ENCODE measurements at regions of chr1 and their contacts with region 1.

Region 1: GRCh38 chr1:91165033-91165654 is 143.3 kb upstream of the ZNF644 start:
- DNase-seq: peak; percentile 66 to 80
- ATAC-seq: peak; percentile 88 to 96 (median 93)
- H3K4me3 ChIP-seq: no peak overlapping the region
- H3K27ac ChIP-seq: no peak overlapping the region
- H3K4me1 ChIP-seq: no peaks in the 10 kb centered on the region
- H3K27me3 ChIP-seq: peaks cover 0 to 6% (median 0%) of the 10 kb centered on the region in 7 donors
- CTCF ChIP-seq: peak; percentile 71 to 96 (median 89)

Region 2: DNA sequence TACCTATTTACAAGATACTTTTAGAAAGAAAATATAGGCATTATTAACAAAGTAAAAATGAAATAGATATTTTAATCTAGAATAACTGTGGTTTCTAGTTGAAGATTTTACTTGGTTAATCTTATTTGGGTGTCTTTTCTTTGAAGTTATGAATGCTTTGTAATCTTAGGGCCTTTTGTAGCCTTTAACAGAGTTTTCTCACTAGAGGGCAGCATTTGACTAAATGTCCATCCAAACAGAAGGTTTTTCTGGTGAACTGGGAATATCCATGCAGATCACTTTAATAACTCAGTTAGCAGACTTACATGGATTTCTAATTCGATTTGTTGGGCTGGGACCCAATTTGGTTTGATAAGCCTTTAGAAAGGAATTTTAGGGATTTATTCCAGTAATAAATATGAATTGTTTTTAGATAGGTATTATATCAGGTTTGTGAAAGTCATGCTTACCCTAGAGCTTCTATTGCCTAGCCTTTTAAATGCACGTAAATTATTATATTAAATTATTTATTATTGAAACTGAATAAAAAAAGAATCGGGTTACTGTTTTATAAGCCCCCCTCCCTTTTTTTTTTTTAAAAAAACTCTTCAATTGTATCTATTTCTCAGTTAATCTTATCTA is 1050.5 kb before region 1 on chr1:
- intact Hi-C with region 1: loop called in 4 of 10 experiments (anchors 10 kb)
- DNase-seq: no peak
- ATAC-seq: no peak
- H3K4me3 ChIP-seq: no peak overlapping the region
- H3K27ac ChIP-seq: no peak overlapping the region
- H3K4me1 ChIP-seq: no peaks in the 10 kb centered on the region
- H3K27me3 ChIP-seq: peaks cover 0 to 64% (median 31%) of the 10 kb centered on the region in 7 donors
- CTCF ChIP-seq: peak; percentile 19 to 77 (median 65)

Region 3: GRCh38 chr1:90579212-90579802 is 585.8 kb before region 1 on chr1:
- intact Hi-C with region 1: loop called in 4 of 10 experiments (anchors 5 to 10 kb)
- DNase-seq: no peak
- ATAC-seq: no peak
- H3K4me3 ChIP-seq: no peak overlapping the region
- H3K27ac ChIP-seq: no peak overlapping the region
- H3K4me1 ChIP-seq: no peaks in the 10 kb centered on the region
- H3K27me3 ChIP-seq: peaks cover 0 to 59% (median 12%) of the 10 kb centered on the region in 7 donors
- CTCF ChIP-seq: peak; percentile 26 to 75 (median 68)

Region 4: DNA sequence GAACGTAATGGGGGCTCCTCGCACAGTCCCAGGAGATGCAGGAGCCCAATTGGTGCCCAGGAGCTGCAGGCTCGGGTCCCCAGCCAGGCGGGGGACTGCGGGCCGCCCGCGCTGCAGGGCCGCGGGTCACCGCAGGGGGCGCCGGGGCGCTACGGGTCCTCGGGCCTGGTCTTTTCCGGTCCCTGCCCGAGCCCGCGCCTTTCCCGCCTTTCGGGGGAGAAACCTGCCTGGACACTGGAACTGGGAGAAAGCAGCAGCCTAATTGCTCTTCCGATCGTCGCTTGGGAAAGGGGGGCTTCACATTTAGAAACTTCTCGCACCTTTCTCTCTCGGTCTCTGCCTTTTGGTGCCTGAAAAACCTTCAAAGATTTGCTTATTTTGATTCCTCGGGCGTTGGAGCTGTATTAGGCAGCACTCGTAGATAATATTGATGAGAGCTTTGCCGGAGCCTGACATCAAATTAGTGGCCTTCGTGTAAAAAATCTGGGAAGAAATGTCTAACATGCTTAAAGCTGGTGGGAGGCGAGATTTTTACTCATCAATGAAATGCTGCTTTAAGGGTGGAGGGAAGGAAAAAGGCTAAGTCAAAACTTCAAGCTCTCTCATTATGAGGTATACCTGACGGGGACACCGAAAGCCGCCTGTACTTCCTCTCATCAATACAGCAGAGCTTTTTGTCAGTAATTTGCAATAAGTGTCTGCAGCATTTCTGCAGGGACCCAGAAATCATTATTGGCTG is 435.5 kb before region 1 on chr1:
- intact Hi-C with region 1: loop called in 4 of 10 experiments (anchors 5 to 10 kb)
- DNase-seq: no peak
- ATAC-seq: no peak
- H3K4me3 ChIP-seq: peak overlapping the region in 1 of 10 donors; percentile 32
- H3K27ac ChIP-seq: no peak overlapping the region
- H3K4me1 ChIP-seq: peaks cover 11 to 53% (median 35%) of the 10 kb centered on the region in 9 donors
- H3K27me3 ChIP-seq: peaks cover 56 to 100% (median 99%) of the 10 kb centered on the region in 7 donors
- CTCF ChIP-seq: peak in 6 of 9 donors; percentile 14 to 44 (median 26)

Region 5: DNA sequence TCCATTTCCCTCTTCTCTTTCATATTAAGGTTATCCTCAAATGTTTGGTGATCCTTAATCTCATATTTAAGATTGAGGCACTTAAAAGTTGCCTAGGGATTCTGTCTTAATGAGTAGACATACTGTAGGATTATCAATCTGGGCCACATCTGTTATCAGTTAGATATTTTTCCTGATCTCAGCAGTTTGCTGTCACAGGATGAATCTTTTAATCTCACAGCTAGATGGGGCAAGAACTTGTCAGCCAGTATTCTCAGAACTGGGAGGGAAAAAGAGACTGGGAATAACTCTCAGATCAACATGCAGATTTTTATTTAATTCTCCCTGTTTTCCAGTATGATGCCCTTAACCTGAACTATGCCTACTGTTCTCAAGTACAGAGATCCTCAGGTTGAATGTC is 157.3 kb before region 1 on chr1:
- intact Hi-C with region 1: no loop called
- DNase-seq: no peak
- ATAC-seq: no peak
- H3K4me3 ChIP-seq: no peak overlapping the region
- H3K27ac ChIP-seq: no peak overlapping the region
- H3K4me1 ChIP-seq: peaks cover 0 to 57% (median 47%) of the 10 kb centered on the region in 9 donors
- H3K27me3 ChIP-seq: no peaks in the 10 kb centered on the region
- CTCF ChIP-seq: no peak

Region 6: GRCh38 chr1:91080650-91081049 is 84.5 kb before region 1 on chr1:
- intact Hi-C with region 1: no loop called
- DNase-seq: no peak
- ATAC-seq: no peak
- H3K4me3 ChIP-seq: no peak overlapping the region
- H3K27ac ChIP-seq: no peak overlapping the region
- H3K4me1 ChIP-seq: no peaks in the 10 kb centered on the region
- H3K27me3 ChIP-seq: no peaks in the 10 kb centered on the region
- CTCF ChIP-seq: no peak

Region 7: DNA sequence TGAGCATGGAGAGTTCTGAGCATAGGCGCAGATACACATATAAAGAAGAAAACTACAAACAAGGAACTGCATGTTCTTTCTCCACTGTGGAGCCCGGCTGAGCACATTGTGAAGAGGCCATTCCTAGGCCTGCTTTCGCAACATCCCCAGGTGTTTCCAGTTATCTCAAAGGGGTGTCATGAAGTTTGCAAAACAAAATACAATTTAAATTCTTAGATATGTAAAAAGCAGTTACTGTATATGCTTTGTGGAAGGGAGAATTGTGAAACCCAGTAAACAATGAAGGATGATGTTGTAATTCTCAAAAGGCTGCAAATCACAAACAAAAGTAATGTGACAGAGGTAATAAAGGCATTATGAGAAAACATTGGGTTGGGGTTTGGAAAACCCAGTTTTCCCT is 44.7 kb before region 1 on chr1:
- intact Hi-C with region 1: no loop called
- DNase-seq: no peak
- ATAC-seq: no peak
- H3K4me3 ChIP-seq: no peak overlapping the region
- H3K27ac ChIP-seq: no peak overlapping the region
- H3K4me1 ChIP-seq: no peaks in the 10 kb centered on the region
- H3K27me3 ChIP-seq: no peaks in the 10 kb centered on the region
- CTCF ChIP-seq: no peak

Region 8: GRCh38 chr1:91397605-91398004 is 232.5 kb after region 1 on chr1:
- intact Hi-C with region 1: loop called in 1 of 10 experiments (anchors 5 kb)
- DNase-seq: no peak
- ATAC-seq: peak in 1 of 8 donors; percentile 22
- H3K4me3 ChIP-seq: no peak overlapping the region
- H3K27ac ChIP-seq: peak overlapping the region in 1 of 10 donors; percentile 2
- H3K4me1 ChIP-seq: peaks cover 0 to 13% (median 7%) of the 10 kb centered on the region in 9 donors
- H3K27me3 ChIP-seq: peaks cover 0 to under 1% (median 0%) of the 10 kb centered on the region in 7 donors
- CTCF ChIP-seq: no peak

Measured in heart right ventricle (tissue), 16 donors.